ENCODE measurements at regions of chr1 and their contacts with region 1.

Region 1: GRCh38 chr1:112619520-112620376 is at the start of gene CAPZA1:
- DNase-seq: peak; percentile 83 to 96 (median 89)
- ATAC-seq: peak; percentile 65
- H3K4me3 ChIP-seq: peak within 1 kb of the TSS; percentile 85 to 88
- H3K4me3 Mint-ChIP-seq: peak within 1 kb of the TSS; percentile 98
- H3K27ac ChIP-seq: peak within 1 kb of the TSS; percentile 98 to 100
- H3K27ac Mint-ChIP-seq: peak within 1 kb of the TSS; percentile 100
- H3K4me1 ChIP-seq: peaks cover 31% of the 10 kb centered on the region
- H3K4me1 Mint-ChIP-seq: peaks cover 44% of the 10 kb centered on the region
- H3K27me3 ChIP-seq: no peaks in the 10 kb centered on the region
- H3K27me3 Mint-ChIP-seq: no peaks in the 10 kb centered on the region
- CTCF ChIP-seq: no peak
- total RNA-seq, gene CAPZA1: 185 to 196 TPM

Region 2: GRCh38 chr1:112508278-112509004 is 111.3 kb before region 1 on chr1 and contains the start of gene WNT2B:
- CTCF ChIA-PET with region 1: no interaction called
- POLR2A ChIA-PET with region 1: no interaction called
- intact Hi-C with region 1: loop called in 1 of 2 experiments (anchors 2 kb)
- DNase-seq: peak; percentile 20 to 75 (median 58)
- ATAC-seq: peak; percentile 87
- H3K4me3 ChIP-seq: peak within 1 kb of the TSS; percentile 62 to 64
- H3K4me3 Mint-ChIP-seq: peak within 1 kb of the TSS; percentile 83
- H3K27ac ChIP-seq: no peak within 1 kb of the TSS
- H3K27ac Mint-ChIP-seq: peak within 1 kb of the TSS; percentile 42
- H3K4me1 ChIP-seq: peaks cover 11% of the 10 kb centered on the region
- H3K4me1 Mint-ChIP-seq: peaks cover 9% of the 10 kb centered on the region
- H3K27me3 ChIP-seq: peaks cover 3 to 6% of the 10 kb centered on the region in 2 experiments
- H3K27me3 Mint-ChIP-seq: peaks cover 25% of the 10 kb centered on the region
- CTCF ChIP-seq: no peak
- total RNA-seq, gene WNT2B: 0.41 to 0.47 TPM

Region 3: GRCh38 chr1:112633628-112634027 is 13.9 kb after region 1 on chr1:
- CTCF ChIA-PET with region 1: interaction called, 3 read pairs
- POLR2A ChIA-PET with region 1: interaction called, 9 read pairs
- intact Hi-C with region 1: loop called in 1 of 2 experiments (anchors 2 kb)
- DNase-seq: no peak
- ATAC-seq: no peak
- H3K4me3 ChIP-seq: no peak overlapping the region
- H3K4me3 Mint-ChIP-seq: no peak overlapping the region
- H3K27ac ChIP-seq: peak overlapping the region in 1 of 2 experiments; percentile 22
- H3K27ac Mint-ChIP-seq: peak overlapping the region; percentile 81
- H3K4me1 ChIP-seq: peaks cover 45% of the 10 kb centered on the region
- H3K4me1 Mint-ChIP-seq: peaks cover 75% of the 10 kb centered on the region
- H3K27me3 ChIP-seq: no peaks in the 10 kb centered on the region
- H3K27me3 Mint-ChIP-seq: no peaks in the 10 kb centered on the region
- CTCF ChIP-seq: no peak

Region 4: DNA sequence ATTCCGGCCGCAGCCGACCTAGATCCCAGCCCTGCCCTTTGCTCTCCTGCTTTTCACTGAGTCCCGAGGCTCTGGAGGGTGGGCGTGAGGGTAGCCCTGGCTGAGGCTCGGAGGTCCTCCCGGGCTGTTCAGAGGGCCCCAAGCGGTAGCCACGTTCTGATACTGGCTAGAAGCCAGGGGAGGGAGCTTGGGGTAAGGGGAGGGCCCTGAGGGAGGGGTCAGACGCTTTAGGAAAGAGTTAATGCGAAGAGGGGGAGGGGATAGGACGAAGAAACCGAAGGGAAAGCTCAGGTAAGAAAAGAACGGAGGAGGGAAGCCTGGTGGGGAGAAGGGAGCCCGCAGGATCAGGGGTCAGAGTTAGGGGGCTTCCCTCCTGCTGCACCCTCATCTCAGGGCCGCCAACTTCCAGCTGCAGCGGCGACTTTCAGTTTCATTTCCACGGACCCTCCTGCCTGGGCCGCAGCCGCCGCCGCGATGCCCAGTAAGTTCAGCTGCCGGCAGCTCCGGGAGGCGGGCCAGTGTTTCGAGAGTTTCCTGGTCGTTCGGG is 54.8 kb after region 1 on chr1 and contains the start of gene MOV10:
- CTCF ChIA-PET with region 1: interaction called, 5 read pairs
- POLR2A ChIA-PET with region 1: interaction called, 40 read pairs
- intact Hi-C with region 1: loop called (anchors 1 kb)
- DNase-seq: peak in 8 of 9 experiments; percentile 34 to 85 (median 62)
- ATAC-seq: peak; percentile 67
- H3K4me3 ChIP-seq: peak within 1 kb of the TSS; percentile 65 to 85
- H3K4me3 Mint-ChIP-seq: peak within 1 kb of the TSS; percentile 93
- H3K27ac ChIP-seq: peak within 1 kb of the TSS; percentile 63 to 75
- H3K27ac Mint-ChIP-seq: peak within 1 kb of the TSS; percentile 94
- H3K4me1 ChIP-seq: peaks cover 24% of the 10 kb centered on the region
- H3K4me1 Mint-ChIP-seq: peaks cover 46% of the 10 kb centered on the region
- H3K27me3 ChIP-seq: no peaks in the 10 kb centered on the region
- H3K27me3 Mint-ChIP-seq: no peaks in the 10 kb centered on the region
- CTCF ChIP-seq: no peak
- total RNA-seq, gene MOV10: 92.4 to 94.7 TPM

Region 5: DNA sequence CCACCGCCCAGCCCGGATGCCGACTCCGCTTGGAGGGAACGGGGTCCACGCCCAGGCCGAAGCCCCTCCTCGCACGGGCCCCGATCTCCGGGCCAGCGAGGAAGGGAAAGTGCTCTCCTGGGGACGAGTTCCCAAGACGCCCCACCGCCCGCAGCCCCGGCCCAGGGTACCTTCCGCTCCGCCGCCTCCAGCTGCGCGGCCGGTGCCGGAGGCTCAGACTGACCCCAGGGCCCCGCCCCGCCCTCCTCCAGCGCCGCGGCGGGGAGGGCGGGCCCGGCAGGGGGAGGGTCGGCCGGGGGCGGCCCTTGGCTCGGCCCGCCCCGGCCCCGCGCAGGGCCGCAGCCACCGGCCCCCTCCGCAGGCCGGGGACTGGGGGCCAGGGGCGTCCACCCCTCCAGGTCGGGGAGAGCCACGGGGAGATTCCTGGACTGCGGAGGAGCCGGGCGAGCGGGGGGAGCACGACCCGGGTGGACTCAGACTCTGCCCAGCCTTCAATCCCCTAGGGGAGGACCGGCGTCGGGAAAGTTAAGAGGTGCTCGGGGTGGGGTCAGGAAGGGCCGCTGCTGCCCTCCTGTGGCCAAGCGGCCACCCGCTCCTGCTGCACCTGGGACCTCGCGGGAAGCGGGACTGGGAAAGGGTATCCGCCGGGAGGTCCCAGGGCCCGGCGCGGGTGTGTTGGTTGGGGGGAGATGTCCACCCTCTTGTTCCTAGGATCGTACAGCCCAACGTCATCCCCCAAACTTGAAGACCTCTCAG is 87.3 kb after region 1 on chr1 and contains the start of gene RHOC:
- CTCF ChIA-PET with region 1: no interaction called
- POLR2A ChIA-PET with region 1: interaction called, 19 read pairs
- intact Hi-C with region 1: loop called in 1 of 2 experiments (anchors 1 kb)
- DNase-seq: peak; percentile 17 to 83 (median 61)
- ATAC-seq: peak; percentile 50
- H3K4me3 ChIP-seq: peak within 1 kb of the TSS; percentile 23 to 62
- H3K4me3 Mint-ChIP-seq: peak within 1 kb of the TSS; percentile 83
- H3K27ac ChIP-seq: peak within 1 kb of the TSS in 1 of 2 experiments; percentile 73
- H3K27ac Mint-ChIP-seq: no peak within 1 kb of the TSS
- H3K4me1 ChIP-seq: peaks cover 28% of the 10 kb centered on the region
- H3K4me1 Mint-ChIP-seq: peaks cover 34% of the 10 kb centered on the region
- H3K27me3 ChIP-seq: no peaks in the 10 kb centered on the region
- H3K27me3 Mint-ChIP-seq: no peaks in the 10 kb centered on the region
- CTCF ChIP-seq: peak; percentile 67
- total RNA-seq, gene RHOC: 7.9 TPM

Region 6: GRCh38 chr1:112955781-112956543 is 336.2 kb after region 1 on chr1 and contains the start of gene SLC16A1:
- CTCF ChIA-PET with region 1: no interaction called
- POLR2A ChIA-PET with region 1: interaction called, 4 read pairs
- intact Hi-C with region 1: loop called in 1 of 2 experiments (anchors 2 kb)
- DNase-seq: peak; percentile 68 to 92 (median 86)
- ATAC-seq: peak; percentile 78
- H3K4me3 ChIP-seq: peak within 1 kb of the TSS; percentile 97 to 98
- H3K4me3 Mint-ChIP-seq: peak within 1 kb of the TSS; percentile 98
- H3K27ac ChIP-seq: peak within 1 kb of the TSS; percentile 79 to 87
- H3K27ac Mint-ChIP-seq: peak within 1 kb of the TSS; percentile 90
- H3K4me1 ChIP-seq: peaks cover 25% of the 10 kb centered on the region
- H3K4me1 Mint-ChIP-seq: peaks cover 63% of the 10 kb centered on the region
- H3K27me3 ChIP-seq: no peaks in the 10 kb centered on the region
- H3K27me3 Mint-ChIP-seq: no peaks in the 10 kb centered on the region
- CTCF ChIP-seq: no peak
- total RNA-seq, gene SLC16A1: 34.0 to 34.1 TPM

Region 7: DNA sequence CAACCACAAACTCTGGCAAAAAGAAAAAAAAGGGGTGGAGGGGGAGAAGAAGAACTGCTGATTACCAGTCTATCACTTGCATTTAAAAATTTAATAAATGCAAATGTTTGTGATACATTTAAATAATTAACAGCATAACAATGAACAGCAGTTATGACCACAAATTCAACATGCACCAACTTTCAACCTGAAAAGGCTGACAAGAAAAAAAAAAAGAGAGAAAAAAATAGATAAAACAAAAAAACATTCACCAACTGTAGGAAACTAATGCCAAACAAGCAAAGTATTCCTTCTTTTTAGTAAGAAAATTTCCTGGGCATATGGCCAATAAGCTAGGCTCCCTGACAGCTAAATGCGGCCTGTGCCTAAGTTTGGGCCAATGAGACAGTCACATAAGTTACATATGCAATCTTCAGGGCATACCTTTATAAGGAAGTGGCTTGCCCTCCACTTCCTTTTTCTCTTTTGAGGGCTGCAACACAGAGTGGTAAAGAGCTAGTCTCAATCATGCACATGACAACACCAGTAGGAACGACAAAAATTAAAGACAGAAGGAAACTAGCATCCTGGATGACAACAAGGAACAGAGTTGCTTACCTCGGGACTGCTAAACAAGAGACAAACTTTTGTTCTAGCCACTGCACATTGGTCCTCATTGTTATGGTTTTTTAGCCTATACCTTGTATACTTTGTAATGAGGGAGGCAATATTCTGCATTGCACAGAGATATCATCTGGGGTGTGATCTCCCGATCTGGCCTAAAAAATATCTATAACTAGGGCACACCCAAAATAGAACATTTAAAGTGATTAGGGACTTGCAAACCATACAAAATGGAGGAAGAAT is 1163.7 kb after region 1 on chr1:
- CTCF ChIA-PET with region 1: no interaction called
- POLR2A ChIA-PET with region 1: no interaction called
- intact Hi-C with region 1: loop called in 1 of 2 experiments (anchors 10 kb)
- DNase-seq: peak; percentile 10 to 85 (median 44)
- ATAC-seq: peak; percentile 94
- H3K4me3 ChIP-seq: peak overlapping the region; percentile 13 to 20
- H3K4me3 Mint-ChIP-seq: peak overlapping the region; percentile 61
- H3K27ac ChIP-seq: peak overlapping the region; percentile 38 to 74
- H3K27ac Mint-ChIP-seq: peak overlapping the region; percentile 86
- H3K4me1 ChIP-seq: peaks cover 68% of the 10 kb centered on the region
- H3K4me1 Mint-ChIP-seq: peaks cover 37% of the 10 kb centered on the region
- H3K27me3 ChIP-seq: no peaks in the 10 kb centered on the region
- H3K27me3 Mint-ChIP-seq: no peaks in the 10 kb centered on the region
- CTCF ChIP-seq: no peak

Measured in CD8-positive, alpha-beta T cell (primary cell).